ENCODE measurements at regions of chr6 and their contacts with region 1.

Region 1: GRCh38 chr6:134174672-134175198 is 122.3 kb upstream of the SLC2A12 start:
- DNase-seq: peak; percentile 84 to 89
- ATAC-seq: peak; percentile 41 to 48
- H3K4me3 ChIP-seq: peak overlapping the region; percentile 71 to 94 (median 86)
- H3K27ac ChIP-seq: peak overlapping the region; percentile 92 to 98 (median 96)
- H3K4me1 ChIP-seq: peaks cover 38 to 52% of the 10 kb centered on the region in 2 donors
- H3K27me3 ChIP-seq: no peaks in the 10 kb centered on the region
- CTCF ChIP-seq: peak in 1 of 5 experiments; percentile 5
- POLR2A ChIP-seq: peak; percentile 98 to 99

Region 2: DNA sequence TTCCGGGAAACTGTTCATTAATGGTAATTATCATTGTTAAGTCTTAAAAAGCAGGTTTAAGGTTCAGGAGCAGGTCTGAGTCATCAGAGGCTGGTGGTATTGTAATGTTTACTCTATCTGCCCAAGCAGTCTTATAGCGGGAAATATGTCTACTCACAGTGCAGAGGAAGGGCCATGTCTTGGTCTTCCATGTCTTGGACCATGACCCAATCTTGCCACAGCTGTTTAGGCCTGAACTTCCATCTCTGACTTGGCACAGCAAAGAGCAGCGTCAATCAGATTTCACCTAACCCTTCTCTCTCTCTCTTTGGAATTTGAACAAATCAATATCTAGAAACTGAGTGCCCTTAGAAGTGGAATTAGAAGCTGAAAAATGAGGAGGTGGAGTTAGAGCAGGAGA is 148.1 kb before region 1 on chr6:
- in situ Hi-C with region 1: no loop called
- intact Hi-C with region 1: no loop called
- DNase-seq: no peak
- ATAC-seq: no peak
- H3K4me3 ChIP-seq: no peak overlapping the region
- H3K27ac ChIP-seq: no peak overlapping the region
- H3K4me1 ChIP-seq: no peaks in the 10 kb centered on the region
- H3K27me3 ChIP-seq: no peaks in the 10 kb centered on the region
- CTCF ChIP-seq: no peak
- POLR2A ChIP-seq: no peak

Region 3: DNA sequence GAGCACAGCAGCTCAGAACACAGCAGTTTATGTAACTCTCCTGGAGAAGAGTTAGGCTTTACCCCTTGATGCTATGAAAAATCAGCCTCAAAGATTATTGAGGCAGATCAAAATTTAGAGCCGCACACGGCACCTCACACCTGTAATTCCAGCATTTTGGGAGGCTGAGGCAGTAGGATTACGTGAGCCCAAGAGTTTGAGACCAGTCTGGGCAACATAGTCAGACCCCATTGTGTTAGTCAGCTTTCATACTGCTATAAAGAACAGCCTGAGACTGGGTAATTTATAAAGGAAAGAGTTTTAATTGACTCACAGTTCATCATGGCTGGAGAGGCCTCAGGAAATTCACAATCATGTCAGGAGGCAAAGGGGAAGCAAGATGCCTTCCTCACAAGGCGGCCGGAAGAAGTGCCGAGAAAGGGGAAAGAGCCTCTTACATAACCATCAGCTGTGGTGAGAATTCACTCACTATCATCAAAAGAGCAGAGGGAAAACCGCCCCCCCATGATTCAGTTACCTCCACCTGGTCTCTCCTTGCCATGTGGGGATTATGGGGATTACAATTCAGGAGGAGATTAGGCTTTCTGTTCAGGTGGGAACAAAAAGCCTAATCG is 55.5 kb after region 1 on chr6:
- in situ Hi-C with region 1: no loop called
- intact Hi-C with region 1: no loop called
- DNase-seq: peak in 1 of 2 donors; percentile 30
- ATAC-seq: no peak
- H3K4me3 ChIP-seq: no peak overlapping the region
- H3K27ac ChIP-seq: no peak overlapping the region
- H3K4me1 ChIP-seq: no peaks in the 10 kb centered on the region
- H3K27me3 ChIP-seq: no peaks in the 10 kb centered on the region
- CTCF ChIP-seq: no peak
- POLR2A ChIP-seq: no peak

Region 4: DNA sequence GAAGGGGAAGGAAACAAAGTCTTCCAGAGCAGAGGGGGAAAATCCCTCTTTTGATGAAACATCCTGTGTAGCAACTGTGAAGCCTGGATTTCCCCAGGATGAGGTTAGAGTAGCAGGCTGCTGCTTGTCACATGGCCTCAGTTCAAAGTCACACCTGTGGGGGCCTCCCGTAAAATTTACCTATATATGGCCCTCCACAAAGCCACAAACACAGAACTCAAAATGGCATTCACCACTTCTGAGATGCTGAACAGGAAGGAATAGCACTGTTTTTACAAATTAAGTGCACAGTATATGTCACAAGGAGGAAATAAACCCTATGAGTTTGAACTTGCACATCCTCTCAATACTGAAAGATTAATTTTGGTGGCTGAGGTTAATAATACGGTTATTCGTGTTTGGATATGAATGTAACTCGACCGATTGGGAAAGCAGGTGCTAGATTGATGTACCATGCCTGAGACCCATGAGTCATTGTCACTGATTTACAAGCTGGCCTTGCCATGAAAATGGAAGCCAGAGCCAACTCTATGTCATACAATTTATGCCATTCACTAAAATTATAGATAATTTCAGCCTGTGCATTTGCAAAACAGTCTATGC is 72.6 kb after region 1 on chr6:
- in situ Hi-C with region 1: no loop called
- intact Hi-C with region 1: loop called (anchors 1 kb)
- DNase-seq: peak; percentile 39 to 47
- ATAC-seq: peak; percentile 92 to 98
- H3K4me3 ChIP-seq: no peak overlapping the region
- H3K27ac ChIP-seq: peak overlapping the region; percentile 52 to 78 (median 60)
- H3K4me1 ChIP-seq: peaks cover 40 to 41% of the 10 kb centered on the region in 2 donors
- H3K27me3 ChIP-seq: no peaks in the 10 kb centered on the region
- CTCF ChIP-seq: no peak
- POLR2A ChIP-seq: no peak

Region 5: GRCh38 chr6:134464690-134465411 is 290.1 kb after region 1 on chr6:
- in situ Hi-C with region 1: loop called in 2 of 4 experiments (anchors 25 kb)
- intact Hi-C with region 1: loop called (anchors 2 kb)
- DNase-seq: peak; percentile 83 to 91
- ATAC-seq: peak; percentile 91 to 97
- H3K4me3 ChIP-seq: no peak overlapping the region
- H3K27ac ChIP-seq: peak overlapping the region; percentile 86 to 90 (median 87)
- H3K4me1 ChIP-seq: peaks cover 34 to 56% of the 10 kb centered on the region in 2 donors
- H3K27me3 ChIP-seq: no peaks in the 10 kb centered on the region
- CTCF ChIP-seq: no peak
- POLR2A ChIP-seq: no peak

Region 6: GRCh38 chr6:134640975-134641429 is 466.3 kb after region 1 on chr6:
- in situ Hi-C with region 1: loop called in 3 of 4 experiments (anchors 5 to 10 kb)
- intact Hi-C with region 1: loop called (anchors 1 kb)
- DNase-seq: peak; percentile 68 to 84
- ATAC-seq: peak; percentile 90 to 97
- H3K4me3 ChIP-seq: no peak overlapping the region
- H3K27ac ChIP-seq: peak overlapping the region in 3 of 4 donors; percentile 3 to 57 (median 21)
- H3K4me1 ChIP-seq: peaks cover 7 to 12% of the 10 kb centered on the region in 2 donors
- H3K27me3 ChIP-seq: no peaks in the 10 kb centered on the region
- CTCF ChIP-seq: peak; percentile 92 to 98 (median 95)
- POLR2A ChIP-seq: no peak

Region 7: DNA sequence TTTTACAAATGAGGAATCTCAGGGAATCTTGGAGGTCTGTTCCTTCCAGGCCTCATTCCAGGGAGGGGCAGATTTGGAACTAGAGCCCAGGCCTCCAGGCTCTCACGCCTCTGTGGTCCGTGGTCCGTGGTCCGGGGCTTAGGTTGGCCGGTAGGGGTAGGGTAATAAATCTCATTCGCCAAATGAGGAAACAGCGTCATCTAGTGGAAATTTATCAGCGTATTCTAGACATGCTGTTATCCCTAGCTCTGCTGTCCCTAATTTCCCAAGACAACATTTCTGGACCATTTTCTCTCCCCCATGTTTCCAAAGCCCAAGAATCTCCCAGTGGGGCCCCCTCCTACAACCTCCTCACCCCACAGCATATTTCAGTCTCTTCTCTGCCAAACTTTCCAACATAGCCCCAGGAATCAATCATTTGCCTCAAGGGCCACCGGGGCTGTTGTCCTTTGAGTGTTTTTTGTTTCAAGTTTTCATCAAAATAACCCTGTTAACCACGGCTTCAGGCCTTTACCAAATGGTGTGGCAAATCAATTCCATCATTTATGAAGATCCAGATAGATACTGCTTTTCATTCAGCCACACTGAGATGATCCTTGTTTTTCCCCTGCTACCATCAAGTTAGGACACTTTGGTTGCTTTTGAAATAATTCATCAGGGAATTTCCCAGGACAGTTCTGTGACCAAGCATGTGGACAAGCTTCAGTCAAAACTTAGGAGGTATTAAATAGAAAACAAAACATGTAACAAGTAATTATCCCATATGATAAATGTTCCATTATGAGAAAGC is 648.4 kb after region 1 on chr6:
- in situ Hi-C with region 1: loop called in 2 of 4 experiments (anchors 5 to 10 kb)
- intact Hi-C with region 1: loop called (anchors 1 kb)
- DNase-seq: peak; percentile 18 to 26
- ATAC-seq: peak; percentile 62 to 70
- H3K4me3 ChIP-seq: no peak overlapping the region
- H3K27ac ChIP-seq: no peak overlapping the region
- H3K4me1 ChIP-seq: peaks cover 13 to 18% of the 10 kb centered on the region in 2 donors
- H3K27me3 ChIP-seq: no peaks in the 10 kb centered on the region
- CTCF ChIP-seq: peak; percentile 84 to 95 (median 89)
- POLR2A ChIP-seq: no peak

Region 8: GRCh38 chr6:134943522-134944111 is 768.9 kb after region 1 on chr6:
- in situ Hi-C with region 1: no loop called
- intact Hi-C with region 1: loop called (anchors 5 kb)
- DNase-seq: no peak
- ATAC-seq: no peak
- H3K4me3 ChIP-seq: no peak overlapping the region
- H3K27ac ChIP-seq: no peak overlapping the region
- H3K4me1 ChIP-seq: no peaks in the 10 kb centered on the region
- H3K27me3 ChIP-seq: no peaks in the 10 kb centered on the region
- CTCF ChIP-seq: no peak
- POLR2A ChIP-seq: no peak

Measured in gastrocnemius medialis (tissue), 4 donors.